Calu3 (cell line): ENCODE measurements at regions of chr3 and their contacts with region 1.

Region 1: DNA sequence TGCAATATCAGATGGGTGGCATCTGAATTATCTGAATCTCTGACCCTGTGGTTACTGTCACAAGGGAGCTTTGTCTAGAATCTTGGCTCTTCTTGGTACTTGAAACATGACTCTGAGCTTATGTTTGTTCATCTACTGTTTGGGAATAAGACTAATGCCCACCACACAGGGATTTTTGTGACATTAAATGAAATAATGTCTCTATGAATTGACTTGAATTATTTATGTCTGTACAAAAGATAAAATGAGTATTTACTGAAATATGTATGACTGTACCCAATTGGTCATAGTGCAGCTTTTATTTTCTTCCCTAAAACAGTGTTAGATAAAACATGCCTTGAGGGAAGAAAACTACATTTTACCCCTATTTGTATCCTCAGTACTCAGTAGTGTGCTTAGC is 87.9 kb upstream of the ZPLD1 start:
- DNase-seq: no peak
- H3K4me3 Mint-ChIP-seq: no peak overlapping the region
- H3K27ac Mint-ChIP-seq: no peak overlapping the region
- H3K4me1 Mint-ChIP-seq: no peaks in the 10 kb centered on the region
- H3K27me3 Mint-ChIP-seq: no peaks in the 10 kb centered on the region
- CTCF ChIP-seq: no peak

Region 2: GRCh38 chr3:101963902-101964362 is 383.0 kb before region 1 on chr3:
- CTCF ChIA-PET with region 1: no interaction called
- intact Hi-C with region 1: no loop called
- DNase-seq: no peak
- H3K4me3 Mint-ChIP-seq: no peak overlapping the region
- H3K27ac Mint-ChIP-seq: peak overlapping the region; percentile 18
- H3K4me1 Mint-ChIP-seq: peaks cover 24% of the 10 kb centered on the region
- H3K27me3 Mint-ChIP-seq: no peaks in the 10 kb centered on the region
- CTCF ChIP-seq: no peak

Region 3: GRCh38 chr3:102400766-102401165 is 53.9 kb after region 1 on chr3:
- CTCF ChIA-PET with region 1: no interaction called
- intact Hi-C with region 1: loop called (anchors 10 kb)
- DNase-seq: no peak
- H3K4me3 Mint-ChIP-seq: no peak overlapping the region
- H3K27ac Mint-ChIP-seq: peak overlapping the region; percentile 83
- H3K4me1 Mint-ChIP-seq: peaks cover 20% of the 10 kb centered on the region
- H3K27me3 Mint-ChIP-seq: no peaks in the 10 kb centered on the region
- CTCF ChIP-seq: no peak